AG04450 (cell line): ENCODE measurements at regions of chr18 and their contacts with region 1.

Region 1: DNA sequence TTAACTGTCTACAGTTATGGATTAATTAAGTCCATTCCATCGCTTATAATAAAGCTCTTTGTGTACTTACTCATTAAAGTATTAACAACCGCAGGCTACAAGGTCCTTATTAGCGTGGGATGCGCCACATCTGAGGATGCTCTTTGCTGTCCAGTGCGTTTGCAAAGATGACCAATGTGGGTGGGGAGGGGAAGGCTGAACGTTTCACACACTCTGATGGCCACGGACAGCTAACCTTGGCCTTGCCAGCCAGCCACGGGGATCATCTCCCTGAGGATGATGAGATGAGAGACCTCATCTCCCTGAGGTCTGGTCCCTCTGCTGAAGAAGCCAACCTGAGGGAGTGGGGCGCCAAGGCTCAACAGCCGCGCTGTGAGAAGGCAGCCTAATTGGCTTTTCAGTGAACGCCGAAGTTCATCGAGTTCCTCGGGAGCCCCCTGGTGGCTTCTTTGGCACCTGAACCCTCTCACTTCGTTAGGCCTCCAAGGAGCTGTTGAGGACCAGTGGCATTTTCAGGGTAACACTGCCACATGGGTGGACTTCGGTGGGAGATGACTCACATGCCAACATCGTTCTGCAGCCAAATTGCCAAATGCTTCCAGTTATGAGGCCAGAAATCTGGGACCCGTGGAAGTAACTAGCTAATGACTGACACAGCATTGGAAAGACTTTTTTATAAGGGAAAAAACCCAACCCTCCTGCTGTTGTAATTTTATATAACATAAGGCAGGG is 69.3 kb upstream of the SEC11C start:
- DNase-seq: peak; percentile 21
- H3K4me3 ChIP-seq: no peak overlapping the region
- H3K27ac ChIP-seq: no peak overlapping the region
- H3K27me3 ChIP-seq: peaks cover 15% of the 10 kb centered on the region
- CTCF ChIP-seq: peak; percentile 87

Region 2: DNA sequence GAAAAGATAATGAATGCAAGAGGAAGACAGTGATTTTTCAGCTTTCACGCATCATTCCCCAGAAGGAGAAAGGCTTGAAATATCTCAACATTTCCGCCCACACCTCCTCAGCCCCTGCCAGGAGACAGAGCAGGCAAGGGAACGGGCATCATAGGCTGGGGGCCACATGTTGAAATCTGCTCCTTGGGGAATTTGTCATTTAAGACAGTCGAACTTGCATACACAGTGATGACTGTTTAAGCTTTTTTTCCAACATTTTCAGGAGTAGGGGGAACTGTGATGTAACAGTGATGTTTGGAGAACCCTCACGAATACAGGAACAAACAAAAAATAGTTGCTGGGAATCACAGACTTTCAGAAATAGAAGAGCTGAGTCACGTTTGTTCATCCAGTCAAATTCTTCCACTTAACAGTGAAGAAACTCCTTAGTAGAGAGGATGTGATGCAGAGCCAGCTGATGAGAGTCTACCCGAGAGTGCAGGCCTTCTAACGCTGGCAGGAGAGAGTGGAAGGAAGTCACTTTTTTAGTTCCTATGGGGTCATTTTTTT is 708.2 kb before region 1 on chr18:
- CTCF ChIA-PET with region 1: no interaction called
- POLR2A ChIA-PET with region 1: no interaction called
- DNase-seq: peak; percentile 81
- H3K4me3 ChIP-seq: no peak overlapping the region
- H3K27ac ChIP-seq: peak overlapping the region; percentile 96
- H3K27me3 ChIP-seq: no peaks in the 10 kb centered on the region
- CTCF ChIP-seq: no peak

Region 3: DNA sequence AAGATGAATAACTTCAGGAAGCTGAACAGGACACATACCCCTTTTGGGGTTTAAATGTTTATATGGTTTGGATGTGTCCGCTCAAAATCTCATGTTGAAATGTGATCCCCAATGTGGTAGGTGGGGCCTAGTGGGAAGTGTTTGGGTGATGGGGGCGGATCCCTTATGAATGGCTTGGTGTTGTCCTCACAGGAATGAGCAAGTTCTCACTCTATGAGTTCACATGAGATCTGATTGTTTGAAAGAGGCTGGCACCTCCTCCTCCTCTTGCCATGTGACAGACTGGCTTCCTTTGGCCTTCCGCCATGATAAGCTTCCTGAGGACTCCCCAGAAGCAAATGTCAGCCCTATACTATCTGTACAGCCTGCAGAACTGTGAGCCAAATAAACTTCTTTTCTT is 294.3 kb before region 1 on chr18:
- CTCF ChIA-PET with region 1: interaction called, 269 read pairs
- POLR2A ChIA-PET with region 1: no interaction called
- DNase-seq: no peak
- H3K4me3 ChIP-seq: no peak overlapping the region
- H3K27ac ChIP-seq: no peak overlapping the region
- H3K27me3 ChIP-seq: no peaks in the 10 kb centered on the region
- CTCF ChIP-seq: no peak

Region 4: GRCh38 chr18:58781627-58782194 is 288.6 kb before region 1 on chr18:
- CTCF ChIA-PET with region 1: interaction called, 164 read pairs
- POLR2A ChIA-PET with region 1: no interaction called
- DNase-seq: no peak
- H3K4me3 ChIP-seq: no peak overlapping the region
- H3K27ac ChIP-seq: no peak overlapping the region
- H3K27me3 ChIP-seq: no peaks in the 10 kb centered on the region
- CTCF ChIP-seq: peak; percentile 86

Region 5: GRCh38 chr18:58827428-58827827 is 242.9 kb before region 1 on chr18:
- CTCF ChIA-PET with region 1: no interaction called
- POLR2A ChIA-PET with region 1: no interaction called
- DNase-seq: no peak
- H3K4me3 ChIP-seq: no peak overlapping the region
- H3K27ac ChIP-seq: no peak overlapping the region
- H3K27me3 ChIP-seq: no peaks in the 10 kb centered on the region
- CTCF ChIP-seq: no peak

Region 6: GRCh38 chr18:59056706-59057492 is 13.4 kb before region 1 on chr18:
- CTCF ChIA-PET with region 1: interaction called, 15 read pairs
- POLR2A ChIA-PET with region 1: no interaction called
- DNase-seq: peak; percentile 15
- H3K4me3 ChIP-seq: no peak overlapping the region
- H3K27ac ChIP-seq: no peak overlapping the region
- H3K27me3 ChIP-seq: no peaks in the 10 kb centered on the region
- CTCF ChIP-seq: peak; percentile 82

Region 7: GRCh38 chr18:59085797-59086196 is 15.4 kb after region 1 on chr18:
- CTCF ChIA-PET with region 1: interaction called, 20 read pairs
- POLR2A ChIA-PET with region 1: no interaction called
- DNase-seq: no peak
- H3K4me3 ChIP-seq: no peak overlapping the region
- H3K27ac ChIP-seq: no peak overlapping the region
- H3K27me3 ChIP-seq: peaks cover 14% of the 10 kb centered on the region
- CTCF ChIP-seq: no peak

Region 8: DNA sequence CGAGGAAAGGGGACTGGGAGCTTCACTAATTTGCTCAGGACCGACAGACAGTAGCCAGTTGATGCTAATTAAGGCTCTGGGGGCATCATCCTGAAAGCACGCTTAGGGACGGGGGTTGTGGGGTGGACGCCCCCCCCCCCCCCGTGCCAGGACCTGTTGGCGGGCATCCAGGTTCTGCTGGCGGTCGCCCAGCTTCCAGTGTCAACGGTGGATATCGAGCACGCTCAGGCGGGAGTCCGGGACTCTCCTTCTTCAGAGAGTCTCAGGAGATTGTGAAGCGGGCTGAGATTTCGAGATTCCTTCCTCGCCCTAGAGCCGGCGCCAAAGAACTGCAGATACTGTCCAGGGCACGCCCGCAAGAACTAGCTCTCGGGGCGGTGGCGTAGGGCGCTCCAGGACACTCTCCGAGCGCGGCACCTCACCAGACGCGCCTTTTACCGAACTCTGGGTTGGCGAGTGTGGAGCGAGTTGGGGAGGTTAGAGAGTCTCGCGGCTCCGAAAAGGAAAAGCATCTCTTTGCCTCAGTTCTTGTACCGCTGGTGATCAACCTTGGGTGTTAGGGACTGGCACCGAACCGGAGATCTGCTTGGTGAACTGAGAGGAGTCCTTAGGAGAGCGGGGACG is 197.3 kb after region 1 on chr18:
- CTCF ChIA-PET with region 1: no interaction called
- POLR2A ChIA-PET with region 1: interaction called, 10 read pairs
- DNase-seq: no peak
- H3K4me3 ChIP-seq: no peak overlapping the region
- H3K27ac ChIP-seq: no peak overlapping the region
- H3K27me3 ChIP-seq: peaks cover 97% of the 10 kb centered on the region
- CTCF ChIP-seq: no peak